Cardiac septum (tissue), 1 donor: ENCODE measurements at regions of chr7 and their contacts with region 1.

Region 1: DNA sequence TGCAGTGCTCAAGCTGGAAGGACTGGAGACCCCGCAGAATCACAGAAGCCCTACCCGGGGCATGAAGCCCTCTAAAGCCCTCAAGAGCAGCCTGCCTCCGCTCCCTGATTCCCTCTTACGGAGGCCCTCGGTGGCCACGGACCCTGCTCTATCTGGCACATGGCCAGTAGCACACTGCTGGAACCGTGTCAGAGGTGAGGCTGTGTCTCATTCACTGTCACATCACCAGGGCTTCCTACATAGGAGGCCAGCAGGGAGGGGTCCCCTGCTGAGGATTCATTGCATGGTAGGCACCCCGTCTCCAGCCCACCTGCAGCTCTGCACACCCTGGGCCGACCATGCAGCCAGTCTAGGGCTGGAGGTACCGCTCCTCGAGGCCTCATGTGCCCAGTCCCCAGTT is 259.2 kb downstream of the TNS3 start:
- DNase-seq: peak; percentile 72

Region 2: GRCh38 chr7:47307311-47307710 is 15.4 kb before region 1 on chr7:
- intact Hi-C with region 1: loop called (anchors 1 kb)
- DNase-seq: no peak